ENCODE measurements at regions of chr3 and their contacts with region 1.

Region 1: GRCh38 chr3:14774431-14774830 is 44.3 kb upstream of the FGD5 start:
- DNase-seq: peak; percentile 37
- ATAC-seq: no peak
- H3K4me3 ChIP-seq: no peak overlapping the region
- H3K27ac ChIP-seq: no peak overlapping the region
- H3K4me1 ChIP-seq: no peaks in the 10 kb centered on the region
- H3K27me3 ChIP-seq: no peaks in the 10 kb centered on the region
- CTCF ChIP-seq: no peak

Region 2: GRCh38 chr3:14678015-14678503 is 96.4 kb before region 1 on chr3:
- intact Hi-C with region 1: loop called (anchors 10 kb)
- DNase-seq: no peak
- ATAC-seq: no peak
- H3K4me3 ChIP-seq: no peak overlapping the region
- H3K27ac ChIP-seq: no peak overlapping the region
- H3K4me1 ChIP-seq: no peaks in the 10 kb centered on the region
- H3K27me3 ChIP-seq: no peaks in the 10 kb centered on the region
- CTCF ChIP-seq: no peak

Region 3: GRCh38 chr3:14810070-14810784 is 35.8 kb after region 1 on chr3:
- intact Hi-C with region 1: no loop called
- DNase-seq: peak; percentile 71
- ATAC-seq: peak; percentile 66
- H3K4me3 ChIP-seq: peak overlapping the region; percentile 62
- H3K27ac ChIP-seq: peak overlapping the region; percentile 85
- H3K4me1 ChIP-seq: peaks cover 33% of the 10 kb centered on the region
- H3K27me3 ChIP-seq: peaks cover 6% of the 10 kb centered on the region
- CTCF ChIP-seq: no peak

Measured in upper lobe of right lung (tissue), 1 donor.